ENCODE measurements at regions of chr12 and their contacts with region 1.

Region 1: GRCh38 chr12:56521590-56522371 is at the start of gene RBMS2:
- DNase-seq: peak in 8 of 9 donors; percentile 23 to 74 (median 58)
- ATAC-seq: peak; percentile 97
- H3K4me3 ChIP-seq: peak within 1 kb of the TSS; percentile 44
- H3K4me3 Mint-ChIP-seq: peak within 1 kb of the TSS; percentile 79 to 98 (median 91)
- H3K27ac ChIP-seq: peak within 1 kb of the TSS; percentile 70
- H3K27ac Mint-ChIP-seq: peak within 1 kb of the TSS; percentile 60 to 97 (median 82)
- H3K4me1 ChIP-seq: peaks cover 6 to 23% of the 10 kb centered on the region in 2 donors
- H3K4me1 Mint-ChIP-seq: peaks cover 25 to 40% (median 37%) of the 10 kb centered on the region in 7 donors
- H3K27me3 ChIP-seq: no peaks in the 10 kb centered on the region
- H3K27me3 Mint-ChIP-seq: peaks cover 0 to 2% (median 0%) of the 10 kb centered on the region in 5 donors
- total RNA-seq, gene RBMS2: 2.5 to 12.8 (median 5.5) TPM

Region 2: DNA sequence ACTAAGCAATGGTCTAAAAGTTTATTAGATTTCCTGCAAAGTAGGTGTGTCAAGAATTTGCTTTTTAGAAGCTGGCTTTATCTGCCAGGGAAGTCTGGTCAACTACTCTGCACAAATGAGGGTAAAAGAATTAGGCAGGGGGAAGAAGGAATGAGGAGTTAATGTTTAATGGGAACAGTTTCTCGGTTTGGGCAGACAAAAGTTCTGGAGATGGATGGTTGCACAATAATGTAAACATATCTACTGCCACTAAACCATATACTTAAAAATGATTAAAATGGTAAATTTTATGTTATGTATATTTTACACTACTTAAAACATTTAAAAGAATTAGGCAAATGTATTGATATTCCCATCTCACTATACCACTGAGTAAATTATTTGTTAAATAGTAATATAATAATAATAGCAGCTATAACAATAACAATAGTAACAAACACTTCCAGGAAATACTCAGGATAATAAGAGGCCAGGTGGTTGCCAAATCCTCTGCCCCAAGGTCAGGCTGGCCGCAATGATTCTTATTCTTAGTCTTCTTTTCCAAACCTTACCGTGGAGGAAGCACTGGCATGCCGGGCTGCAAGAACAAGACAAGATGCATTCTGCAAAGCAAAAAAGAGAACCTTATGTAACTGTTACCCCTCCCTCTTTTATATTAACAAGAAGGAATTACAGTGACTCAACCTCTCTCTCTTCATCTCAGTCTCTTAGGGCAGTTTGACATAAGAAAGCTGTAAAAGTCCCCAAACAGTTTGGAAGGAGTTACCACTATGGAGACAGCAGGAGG is 235.5 kb before region 1 on chr12:
- CTCF ChIA-PET with region 1: no interaction called
- POLR2A ChIA-PET with region 1: no interaction called
- intact Hi-C with region 1: no loop called
- DNase-seq: no peak
- ATAC-seq: no peak
- H3K4me3 ChIP-seq: no peak overlapping the region
- H3K4me3 Mint-ChIP-seq: no peak overlapping the region
- H3K27ac ChIP-seq: no peak overlapping the region
- H3K27ac Mint-ChIP-seq: peak overlapping the region in 4 of 9 donors; percentile 17 to 65 (median 32)
- H3K4me1 ChIP-seq: peaks cover 2 to 6% of the 10 kb centered on the region in 2 donors
- H3K4me1 Mint-ChIP-seq: peaks cover 3 to 24% (median 18%) of the 10 kb centered on the region in 7 donors
- H3K27me3 ChIP-seq: no peaks in the 10 kb centered on the region
- H3K27me3 Mint-ChIP-seq: no peaks in the 10 kb centered on the region

Region 3: DNA sequence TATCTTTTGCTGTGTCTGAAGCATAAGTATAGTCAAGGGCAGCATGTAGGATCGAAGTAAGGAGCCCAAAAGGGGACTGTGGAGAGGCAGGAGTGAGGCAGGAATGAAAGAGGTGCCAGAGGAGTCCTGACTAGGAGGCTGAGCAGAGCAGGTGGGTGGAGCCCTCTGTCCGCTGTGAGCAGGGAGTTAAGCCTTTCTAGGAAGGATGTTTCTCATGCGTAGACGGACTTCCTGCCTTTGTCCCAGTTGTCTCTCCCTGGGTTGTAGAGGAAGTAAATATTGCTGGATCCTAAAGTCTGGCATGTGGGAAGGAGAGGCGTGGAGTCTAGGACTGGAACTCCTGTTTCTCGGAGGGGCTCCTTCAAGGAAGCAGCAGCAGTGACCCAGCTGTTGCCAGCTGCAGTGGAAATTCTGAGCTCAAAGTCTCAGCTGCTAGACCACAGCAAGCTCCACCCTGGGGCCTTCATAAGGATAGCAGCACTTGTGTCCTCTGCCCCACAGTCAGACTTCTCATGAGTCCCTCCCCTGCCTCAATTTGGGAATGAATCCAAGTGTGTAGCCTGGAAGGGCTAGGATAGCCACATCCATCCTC is 43.8 kb after region 1 on chr12:
- CTCF ChIA-PET with region 1: interaction called, 5 read pairs
- POLR2A ChIA-PET with region 1: interaction called, 5 read pairs
- intact Hi-C with region 1: loop called in 1 of 2 experiments (anchors 1 kb)
- DNase-seq: peak in 4 of 9 donors; percentile 15 to 39 (median 24)
- ATAC-seq: peak; percentile 40
- H3K4me3 ChIP-seq: peak overlapping the region; percentile 38
- H3K4me3 Mint-ChIP-seq: peak overlapping the region; percentile 45 to 79 (median 64)
- H3K27ac ChIP-seq: peak overlapping the region; percentile 33
- H3K27ac Mint-ChIP-seq: peak overlapping the region in 8 of 9 donors; percentile 20 to 77 (median 56)
- H3K4me1 ChIP-seq: peaks cover 8 to 21% of the 10 kb centered on the region in 2 donors
- H3K4me1 Mint-ChIP-seq: peaks cover 20 to 31% (median 28%) of the 10 kb centered on the region in 7 donors
- H3K27me3 ChIP-seq: no peaks in the 10 kb centered on the region
- H3K27me3 Mint-ChIP-seq: no peaks in the 10 kb centered on the region

Region 4: GRCh38 chr12:56571126-56571525 is 49.3 kb after region 1 on chr12:
- CTCF ChIA-PET with region 1: interaction called, 6 read pairs
- POLR2A ChIA-PET with region 1: interaction called, 11 read pairs
- intact Hi-C with region 1: loop called in 1 of 2 experiments (anchors 1 kb)
- DNase-seq: no peak
- ATAC-seq: no peak
- H3K4me3 ChIP-seq: no peak overlapping the region
- H3K4me3 Mint-ChIP-seq: peak overlapping the region in 2 of 10 donors; percentile 23 to 49
- H3K27ac ChIP-seq: no peak overlapping the region
- H3K27ac Mint-ChIP-seq: peak overlapping the region in 3 of 9 donors; percentile 15 to 67 (median 28)
- H3K4me1 ChIP-seq: peaks cover 0 to 22% of the 10 kb centered on the region in 2 donors
- H3K4me1 Mint-ChIP-seq: peaks cover 9 to 31% (median 23%) of the 10 kb centered on the region in 7 donors
- H3K27me3 ChIP-seq: no peaks in the 10 kb centered on the region
- H3K27me3 Mint-ChIP-seq: no peaks in the 10 kb centered on the region

Region 5: GRCh38 chr12:56590237-56590830 is 68.6 kb after region 1 on chr12:
- CTCF ChIA-PET with region 1: no interaction called
- POLR2A ChIA-PET with region 1: no interaction called
- intact Hi-C with region 1: no loop called
- DNase-seq: peak in 1 of 9 donors; percentile 18
- ATAC-seq: peak; percentile 62
- H3K4me3 ChIP-seq: no peak overlapping the region
- H3K4me3 Mint-ChIP-seq: no peak overlapping the region
- H3K27ac ChIP-seq: no peak overlapping the region
- H3K27ac Mint-ChIP-seq: no peak overlapping the region
- H3K4me1 ChIP-seq: no peaks in the 10 kb centered on the region
- H3K4me1 Mint-ChIP-seq: peaks cover 0 to 4% (median 0%) of the 10 kb centered on the region in 7 donors
- H3K27me3 ChIP-seq: no peaks in the 10 kb centered on the region
- H3K27me3 Mint-ChIP-seq: no peaks in the 10 kb centered on the region

Measured in naive thymus-derived CD4-positive, alpha-beta T cell (primary cell).